Activated naive CD4-positive, alpha-beta T cell treated with anti-CD3 and anti-CD28 coated beads for 36 hours (primary cell): ENCODE measurements at regions of chr20 and their contacts with region 1.

Region 1: GRCh38 chr20:25195014-25195961 is at the start of gene ENTPD6:
- DNase-seq: peak; percentile 88
- H3K4me3 Mint-ChIP-seq: peak within 1 kb of the TSS; percentile 88
- H3K27ac Mint-ChIP-seq: peak within 1 kb of the TSS; percentile 72
- H3K4me1 Mint-ChIP-seq: peaks cover 41% of the 10 kb centered on the region
- H3K27me3 Mint-ChIP-seq: no peaks in the 10 kb centered on the region
- total RNA-seq, gene ENTPD6: 63.6 to 66.6 TPM

Region 2: GRCh38 chr20:25090492-25091429 is 104.5 kb before region 1 on chr20:
- CTCF ChIA-PET with region 1: no interaction called
- intact Hi-C with region 1: loop called (anchors 2 kb)
- DNase-seq: peak; percentile 88
- H3K4me3 Mint-ChIP-seq: peak overlapping the region; percentile 41
- H3K27ac Mint-ChIP-seq: peak overlapping the region; percentile 44
- H3K4me1 Mint-ChIP-seq: peaks cover 28% of the 10 kb centered on the region
- H3K27me3 Mint-ChIP-seq: peaks cover 7% of the 10 kb centered on the region

Region 3: DNA sequence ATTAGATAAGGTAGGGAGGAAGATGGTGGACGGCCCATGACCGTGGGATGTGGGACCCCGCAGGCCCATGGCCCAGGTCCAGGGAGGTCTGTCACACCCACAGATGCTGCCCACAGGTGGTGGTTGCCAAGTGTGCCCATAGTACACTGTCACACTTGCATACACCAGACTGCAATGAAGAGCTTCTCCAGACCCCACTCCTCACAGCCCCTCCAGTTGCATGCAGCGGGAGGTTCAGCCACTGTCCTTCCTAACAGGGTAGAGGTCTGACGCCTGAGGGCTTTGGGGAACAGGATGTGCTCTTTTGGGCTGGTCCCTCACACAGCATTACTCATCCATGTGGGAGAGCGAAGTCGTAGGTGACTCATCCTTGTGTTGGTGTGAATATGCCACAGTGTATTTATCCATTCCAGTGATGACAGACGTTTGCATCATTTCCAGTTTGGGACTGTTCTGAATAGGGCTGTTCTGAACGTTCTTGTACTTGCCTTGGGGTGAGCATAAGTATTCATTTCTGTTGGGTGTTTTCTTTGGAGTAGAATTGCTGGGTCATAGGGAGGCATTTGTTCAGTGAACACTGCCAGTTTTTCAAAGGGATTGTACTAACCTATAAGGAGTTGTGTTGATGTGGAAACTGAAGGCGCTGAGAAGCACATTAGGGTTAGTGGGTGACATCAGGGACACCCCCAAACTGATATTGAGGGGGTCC is 42.5 kb after region 1 on chr20:
- CTCF ChIA-PET with region 1: interaction called, 3 read pairs
- intact Hi-C with region 1: loop called (anchors 1 kb)
- DNase-seq: peak; percentile 88
- H3K4me3 Mint-ChIP-seq: peak overlapping the region; percentile 42
- H3K27ac Mint-ChIP-seq: peak overlapping the region; percentile 92
- H3K4me1 Mint-ChIP-seq: peaks cover 25% of the 10 kb centered on the region
- H3K27me3 Mint-ChIP-seq: peaks cover 14% of the 10 kb centered on the region

Region 4: DNA sequence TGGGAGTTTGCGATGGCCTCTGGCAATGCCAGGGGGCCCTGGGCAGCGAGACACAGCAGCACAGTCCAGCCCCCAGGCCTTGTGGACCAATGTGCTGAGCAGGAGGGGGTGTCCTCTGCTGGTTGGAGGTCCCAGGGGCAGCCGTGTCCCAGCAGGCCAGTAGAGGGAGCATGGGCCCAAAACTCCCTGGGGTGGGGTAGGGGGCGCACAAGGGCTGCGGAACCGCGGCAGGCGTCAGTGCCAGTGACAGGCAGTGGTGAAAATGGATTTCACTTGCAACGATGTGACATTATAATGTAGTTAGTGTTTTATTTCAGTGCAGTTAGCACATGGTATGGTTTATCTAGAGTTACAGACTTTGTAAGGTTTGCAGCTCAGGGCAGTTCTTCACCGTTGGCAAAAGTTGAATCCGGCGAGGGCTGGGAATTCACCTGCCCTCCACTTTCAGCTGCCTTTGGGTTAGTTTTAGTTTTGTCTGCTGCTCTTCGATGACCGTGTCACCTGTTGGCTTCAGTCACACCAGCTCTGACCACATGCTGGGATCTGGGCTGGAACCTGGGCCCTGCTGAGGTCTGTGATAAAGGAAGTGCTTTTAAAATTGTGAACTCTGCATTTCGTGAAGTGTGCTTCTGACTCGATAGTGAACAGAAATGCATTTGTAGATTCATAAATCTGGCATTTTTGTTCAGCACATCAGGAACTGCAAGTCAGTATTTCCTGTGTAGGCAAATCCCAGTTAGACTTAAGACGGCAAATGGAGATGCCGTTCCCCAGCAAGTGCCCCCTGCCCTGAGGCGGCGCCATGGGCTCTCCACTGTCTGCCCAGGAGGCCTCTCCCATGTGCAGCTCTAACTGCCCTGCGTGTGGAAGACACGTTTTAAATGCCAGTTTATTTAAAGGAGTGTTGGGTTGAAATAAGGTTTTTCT is 99.4 kb after region 1 on chr20:
- CTCF ChIA-PET with region 1: no interaction called
- intact Hi-C with region 1: loop called (anchors 2 kb)
- DNase-seq: peak; percentile 70
- H3K4me3 Mint-ChIP-seq: no peak overlapping the region
- H3K27ac Mint-ChIP-seq: peak overlapping the region; percentile 11
- H3K4me1 Mint-ChIP-seq: no peaks in the 10 kb centered on the region
- H3K27me3 Mint-ChIP-seq: no peaks in the 10 kb centered on the region

Region 5: DNA sequence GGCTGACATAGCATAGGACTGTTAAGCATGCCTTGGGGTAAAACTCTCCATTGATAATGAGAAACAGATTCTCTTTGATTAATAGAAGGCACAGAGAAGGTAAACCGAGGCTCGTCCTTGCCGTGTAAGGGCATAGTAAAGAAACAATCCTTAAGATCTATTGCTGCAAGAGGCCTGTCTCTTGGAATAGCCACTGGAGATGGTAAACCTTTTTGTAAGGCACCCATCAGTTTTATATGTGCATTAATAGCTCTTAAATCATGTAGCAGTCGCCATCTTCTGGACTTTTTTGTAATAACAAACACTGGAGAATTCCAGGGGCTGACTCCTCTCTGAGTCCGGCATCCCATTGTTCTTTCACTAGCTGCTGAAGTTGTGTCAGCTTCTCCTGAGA is 203.7 kb after region 1 on chr20:
- CTCF ChIA-PET with region 1: no interaction called
- intact Hi-C with region 1: loop called (anchors 2 kb)
- DNase-seq: peak; percentile 44
- H3K4me3 Mint-ChIP-seq: no peak overlapping the region
- H3K27ac Mint-ChIP-seq: no peak overlapping the region
- H3K4me1 Mint-ChIP-seq: no peaks in the 10 kb centered on the region
- H3K27me3 Mint-ChIP-seq: no peaks in the 10 kb centered on the region

Region 6: GRCh38 chr20:25514747-25515340 is 319.6 kb after region 1 on chr20:
- CTCF ChIA-PET with region 1: no interaction called
- intact Hi-C with region 1: no loop called
- DNase-seq: no peak
- H3K4me3 Mint-ChIP-seq: no peak overlapping the region
- H3K27ac Mint-ChIP-seq: no peak overlapping the region
- H3K4me1 Mint-ChIP-seq: no peaks in the 10 kb centered on the region
- H3K27me3 Mint-ChIP-seq: no peaks in the 10 kb centered on the region

Region 7: GRCh38 chr20:25623736-25624499 is 428.6 kb after region 1 on chr20 and contains the start of gene NANP:
- CTCF ChIA-PET with region 1: no interaction called
- intact Hi-C with region 1: loop called (anchors 5 kb)
- DNase-seq: peak; percentile 96
- H3K4me3 Mint-ChIP-seq: peak within 1 kb of the TSS; percentile 91
- H3K27ac Mint-ChIP-seq: peak within 1 kb of the TSS; percentile 95
- H3K4me1 Mint-ChIP-seq: peaks cover 18% of the 10 kb centered on the region
- H3K27me3 Mint-ChIP-seq: no peaks in the 10 kb centered on the region
- total RNA-seq, gene NANP: 6.4 to 6.9 TPM